PC-9 (cell line): ENCODE measurements at regions of chr1 and their contacts with region 1.

Region 1: DNA sequence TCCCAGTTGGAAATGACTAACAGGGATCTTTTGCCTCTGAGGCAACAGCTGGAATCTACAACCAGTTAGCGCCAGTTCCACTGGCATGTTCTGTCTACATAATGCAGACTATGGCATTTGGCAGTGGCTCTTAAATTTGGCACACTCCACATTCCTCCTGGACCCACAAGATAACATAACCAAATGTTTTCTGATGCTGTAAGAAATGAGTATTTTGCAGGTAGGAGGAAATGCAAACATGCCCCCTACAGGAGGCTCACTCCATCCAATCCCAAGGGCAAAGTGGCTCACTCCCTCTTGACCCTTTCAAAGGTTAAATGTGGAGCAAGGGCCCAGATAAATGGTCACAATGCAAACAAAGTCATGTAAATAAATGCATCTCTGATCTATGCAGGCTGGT is 129.2 kb upstream of the PROX1 start:
- DNase-seq: no peak
- H3K4me3 ChIP-seq: no peak overlapping the region
- H3K27ac ChIP-seq: no peak overlapping the region
- H3K4me1 ChIP-seq: no peaks in the 10 kb centered on the region
- H3K27me3 ChIP-seq: no peaks in the 10 kb centered on the region
- CTCF ChIP-seq: no peak; the same call in 1 of the 2 replicates

Region 2: DNA sequence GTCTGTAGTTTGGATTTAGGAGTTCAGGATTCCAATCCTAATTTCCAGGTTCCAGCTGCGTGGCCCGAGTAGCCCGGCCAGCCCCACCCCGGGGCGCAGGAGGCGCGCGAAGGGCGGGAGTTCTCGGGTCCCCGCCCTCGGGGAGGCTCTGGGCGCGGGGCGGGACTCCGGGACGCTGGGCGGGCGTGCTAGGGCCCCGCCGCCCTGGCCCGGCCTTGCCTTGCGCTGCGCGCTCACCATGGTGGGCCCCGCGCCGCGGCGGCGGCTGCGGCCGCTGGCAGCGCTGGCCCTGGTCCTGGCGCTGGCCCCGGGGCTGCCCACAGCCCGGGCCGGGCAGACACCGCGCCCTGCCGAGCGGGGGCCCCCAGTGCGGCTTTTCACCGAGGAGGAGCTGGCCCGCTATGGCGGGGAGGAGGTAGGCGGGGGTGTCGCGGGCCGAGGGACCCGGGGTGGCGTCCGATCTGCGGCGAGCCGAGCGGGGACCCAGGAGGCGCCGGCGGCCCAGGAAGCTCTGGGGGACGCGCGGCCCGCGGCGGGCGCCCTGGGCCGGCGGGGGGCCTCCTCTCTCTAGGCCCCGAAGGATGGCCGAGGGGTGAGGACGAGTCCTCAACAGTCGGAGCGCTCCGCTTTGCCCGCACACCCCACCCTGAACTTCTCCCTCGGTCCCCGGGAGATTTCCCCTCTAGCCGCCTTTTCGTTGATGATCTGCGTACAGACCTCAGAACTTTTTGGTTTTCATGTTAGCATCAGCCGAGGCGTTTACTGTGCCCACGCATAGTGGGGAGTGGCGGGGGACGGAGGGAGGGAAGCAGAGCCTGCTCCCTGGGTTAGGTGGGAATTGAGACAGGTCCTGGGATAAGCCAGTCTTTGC is 1425.6 kb before region 1 on chr1 and contains the start of gene NENF:
- CTCF ChIA-PET with region 1: no interaction called
- POLR2A ChIA-PET with region 1: interaction called, 32 read pairs
- intact Hi-C with region 1: no loop called
- DNase-seq: peak; percentile 55 to 89
- H3K4me3 ChIP-seq: peak within 1 kb of the TSS; percentile 60
- H3K27ac ChIP-seq: no peak within 1 kb of the TSS
- H3K4me1 ChIP-seq: peaks cover 21% of the 10 kb centered on the region
- H3K27me3 ChIP-seq: no peaks in the 10 kb centered on the region
- CTCF ChIP-seq: no peak
- total RNA-seq, gene NENF: 71.8 and 85.9 TPM in 2 replicates

Region 3: DNA sequence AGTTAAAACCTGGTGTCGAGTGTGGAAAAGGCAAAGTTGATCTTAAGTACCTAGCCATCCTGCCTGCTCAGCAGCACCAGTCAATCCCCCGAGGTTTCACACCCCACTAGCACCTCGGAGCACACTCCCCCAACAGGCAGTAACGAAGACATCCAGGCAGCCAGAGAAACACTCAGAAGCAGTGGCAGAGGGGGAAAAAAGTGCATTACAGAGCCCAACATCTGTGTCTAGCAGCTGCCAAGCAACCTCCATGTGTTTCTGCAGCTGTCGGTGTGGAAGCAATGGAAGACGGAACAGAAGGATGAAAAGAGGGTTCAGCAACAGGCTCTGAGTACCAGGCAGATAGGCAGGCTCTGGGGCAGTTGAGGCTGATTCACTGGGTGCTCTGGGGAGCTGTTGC is 55.8 kb after region 1 on chr1:
- CTCF ChIA-PET with region 1: no interaction called
- POLR2A ChIA-PET with region 1: no interaction called
- intact Hi-C with region 1: no loop called
- DNase-seq: no peak
- H3K4me3 ChIP-seq: no peak overlapping the region
- H3K27ac ChIP-seq: no peak overlapping the region
- H3K4me1 ChIP-seq: no peaks in the 10 kb centered on the region
- H3K27me3 ChIP-seq: no peaks in the 10 kb centered on the region
- CTCF ChIP-seq: no peak